K562 (cell line): ENCODE measurements at regions of chr1 and their contacts with region 1.

Region 1: GRCh38 chr1:24391882-24392603 is 21.5 kb downstream of the STPG1 start:
- DNase-seq: peak; percentile 71 to 74 (median 73)
- ATAC-seq: peak; percentile 95
- H3K4me3 ChIP-seq: no peak overlapping the region
- H3K27ac ChIP-seq: no peak overlapping the region
- H3K4me1 ChIP-seq: no peaks in the 10 kb centered on the region
- H3K27me3 ChIP-seq: peaks cover 0 to 3% of the 10 kb centered on the region in 2 experiments; a peak in 1 of 5 replicates
- CTCF ChIP-seq: peak; percentile 86 to 90 (median 87)
- EP300 ChIP-seq: no peak
- POLR2A ChIP-seq: no peak
- RAD21 ChIP-seq: peak; percentile 83 to 86

Region 2: GRCh38 chr1:24201941-24202440 is 190.1 kb before region 1 on chr1:
- CTCF ChIA-PET with region 1: interaction called, 222 read pairs
- POLR2A ChIA-PET with region 1: interaction called, 8 read pairs
- in situ Hi-C with region 1: loop called (anchors 5 kb)
- intact Hi-C with region 1: loop called (anchors 1 kb)
- DNase-seq: peak; percentile 63 to 80 (median 69)
- ATAC-seq: peak; percentile 78
- H3K4me3 ChIP-seq: no peak overlapping the region
- H3K27ac ChIP-seq: no peak overlapping the region
- H3K4me1 ChIP-seq: no peaks in the 10 kb centered on the region; a peak in 1 of 5 replicates
- H3K27me3 ChIP-seq: peaks cover 16 to 43% of the 10 kb centered on the region in 2 experiments; a peak in 4 of 5 replicates
- CTCF ChIP-seq: peak; percentile 83 to 94 (median 94)
- EP300 ChIP-seq: no peak
- POLR2A ChIP-seq: no peak
- RAD21 ChIP-seq: peak; percentile 93 to 99